A549 (cell line): ENCODE measurements at regions of chr11 and their contacts with region 1.

Region 1: DNA sequence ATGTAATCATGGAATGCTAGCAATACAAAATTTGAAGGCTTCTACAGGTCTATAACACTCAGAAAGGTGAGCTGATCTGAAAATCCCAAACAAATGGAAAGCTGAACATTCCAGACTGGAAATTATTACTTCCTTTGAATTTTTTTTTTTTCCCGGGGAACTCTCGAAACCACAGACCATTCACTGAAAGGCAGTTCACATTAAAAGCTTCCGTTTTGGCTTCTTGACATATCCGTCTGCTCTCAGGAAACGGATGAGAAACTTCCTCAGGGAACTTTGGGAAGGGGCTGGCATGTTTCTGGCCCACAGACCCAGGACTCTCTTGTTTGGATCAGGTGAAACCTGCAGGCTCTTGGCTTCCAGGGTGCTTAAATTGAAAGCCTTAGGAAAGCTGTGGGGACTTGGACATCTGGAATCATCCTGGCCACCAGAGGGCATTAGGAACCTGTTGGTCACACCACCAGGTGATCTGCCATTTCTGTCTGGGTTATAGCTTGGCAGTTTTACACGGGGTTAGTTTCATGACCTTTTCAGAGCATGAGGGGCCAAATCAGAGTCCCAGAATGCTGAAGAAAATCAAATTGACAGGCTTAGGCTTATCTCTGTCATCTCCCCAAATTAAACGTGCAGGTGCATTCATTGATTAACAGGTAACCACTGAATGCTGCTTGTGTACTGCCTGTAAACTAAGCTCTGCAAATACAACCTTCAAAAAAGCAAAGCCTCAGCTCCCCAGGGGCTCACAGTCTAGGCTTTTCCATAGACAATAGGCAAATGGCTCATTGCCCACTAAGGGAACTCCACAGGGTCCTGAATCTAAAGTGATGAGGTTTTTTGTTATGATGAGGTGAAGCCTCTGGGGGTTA is 22.7 kb upstream of the GRAMD1B start:
- DNase-seq: peak; percentile 51 to 82
- ATAC-seq: peak; percentile 97
- H3K4me3 ChIP-seq: no peak overlapping the region
- H3K27ac ChIP-seq: peak overlapping the region; percentile 16 to 31; a peak in 2 of 6 replicates
- H3K4me1 ChIP-seq: peaks cover 18% of the 10 kb centered on the region
- CTCF ChIP-seq: peak; percentile 73
- EP300 ChIP-seq: no peak
- POLR2A ChIP-seq: no peak
- RAD21 ChIP-seq: peak; percentile 87 to 92

Region 2: GRCh38 chr11:123301696-123302400 is 105.5 kb before region 1 on chr11:
- CTCF ChIA-PET with region 1: interaction called, 20 read pairs
- POLR2A ChIA-PET with region 1: no interaction called
- DNase-seq: peak; percentile 29 to 44
- ATAC-seq: peak; percentile 80 to 95
- H3K4me3 ChIP-seq: peak overlapping the region; percentile 38
- H3K27ac ChIP-seq: peak overlapping the region; percentile 55 to 86; a peak in 5 of 6 replicates
- H3K4me1 ChIP-seq: peaks cover 17% of the 10 kb centered on the region; the same call in 2 of the 3 replicates
- CTCF ChIP-seq: peak; percentile 79
- EP300 ChIP-seq: no peak
- POLR2A ChIP-seq: no peak
- RAD21 ChIP-seq: peak; percentile 45 to 78; a peak in 4 of 5 replicates

Region 3: DNA sequence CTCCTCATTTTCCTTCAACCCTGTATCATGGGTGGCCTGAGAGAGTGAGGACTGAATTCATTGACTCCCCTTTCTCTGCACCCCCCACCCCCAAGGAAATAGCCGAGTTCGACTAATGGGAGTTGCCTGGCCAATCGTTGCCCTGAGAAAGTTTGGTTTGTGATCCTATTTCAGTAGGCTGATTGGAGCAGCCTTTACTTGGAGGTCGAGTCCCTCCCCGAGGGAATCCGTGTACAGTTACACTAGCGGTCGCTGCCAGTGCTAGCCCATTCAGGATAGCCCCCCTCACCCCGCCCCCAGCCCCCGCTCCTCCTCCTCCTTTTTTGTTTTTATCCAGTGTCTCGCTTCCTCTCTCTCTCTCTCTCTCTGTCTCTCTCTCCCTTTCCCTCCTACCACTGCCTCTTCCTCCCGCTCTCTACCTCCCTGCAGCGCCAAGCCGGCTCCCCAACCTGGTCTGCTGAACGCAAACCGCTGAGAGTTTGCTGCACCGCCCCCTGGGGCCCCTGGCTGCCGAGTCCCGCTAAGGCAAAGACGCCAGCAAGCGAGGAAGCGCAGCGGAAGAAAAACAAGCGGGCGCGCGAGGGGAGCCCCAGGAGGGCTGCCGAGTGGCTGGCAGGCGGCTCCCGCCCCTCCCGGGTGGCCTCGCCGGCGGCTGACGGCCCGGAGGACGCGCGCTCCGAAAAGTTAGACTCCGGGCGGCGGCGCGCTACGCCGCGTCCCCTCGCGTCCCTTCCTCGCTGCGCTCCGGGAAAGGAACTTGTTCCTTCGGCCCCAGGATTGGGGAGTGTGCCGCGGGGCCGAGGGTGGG is 22.8 kb after region 1 on chr11 and contains the start of gene GRAMD1B:
- CTCF ChIA-PET with region 1: interaction called, 38 read pairs
- POLR2A ChIA-PET with region 1: interaction called, 4 read pairs
- DNase-seq: peak; percentile 68 to 73
- ATAC-seq: peak; percentile 75 to 81
- H3K4me3 ChIP-seq: peak within 1 kb of the TSS; percentile 93
- H3K27ac ChIP-seq: peak within 1 kb of the TSS; percentile 94 to 95
- H3K4me1 ChIP-seq: peaks cover 14% of the 10 kb centered on the region; the same call in 2 of the 3 replicates
- CTCF ChIP-seq: peak; percentile 0; the same call in 1 of the 3 replicates
- EP300 ChIP-seq: no peak
- POLR2A ChIP-seq: no peak
- RAD21 ChIP-seq: no peak
- polyA plus RNA-seq, gene GRAMD1B: 108 and 113 TPM in 2 replicates

Region 4: DNA sequence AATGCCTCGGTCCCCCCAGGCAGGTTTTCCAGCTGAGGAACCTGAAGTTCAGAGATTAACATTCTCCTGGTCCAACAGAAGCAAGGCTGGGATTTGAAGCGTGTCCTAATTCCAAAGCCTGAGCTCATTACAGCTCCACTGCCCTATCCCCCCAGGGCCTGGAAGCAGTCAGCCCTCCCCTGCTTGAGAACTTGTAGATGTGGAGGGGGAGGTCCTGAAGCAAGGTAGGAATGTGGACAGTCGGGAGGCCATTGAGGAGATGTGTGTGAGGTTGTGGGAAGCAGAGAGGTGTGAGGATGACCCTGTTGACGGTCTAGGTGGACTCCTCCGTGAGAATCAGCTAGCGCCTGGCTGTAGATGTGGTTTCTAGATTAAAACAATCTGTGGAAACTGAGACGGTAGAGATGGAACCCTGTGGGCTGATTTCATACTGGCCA is 30.8 kb after region 1 on chr11:
- CTCF ChIA-PET with region 1: interaction called, 17 read pairs
- POLR2A ChIA-PET with region 1: no interaction called
- DNase-seq: no peak
- ATAC-seq: no peak; a peak in 1 of 6 replicates
- H3K4me3 ChIP-seq: no peak overlapping the region
- H3K27ac ChIP-seq: peak overlapping the region in 1 of 2 experiments; percentile 26; a peak in 1 of 6 replicates
- H3K4me1 ChIP-seq: peaks cover 16% of the 10 kb centered on the region
- CTCF ChIP-seq: no peak
- EP300 ChIP-seq: no peak
- POLR2A ChIP-seq: no peak
- RAD21 ChIP-seq: no peak

Region 5: GRCh38 chr11:123478352-123478987 is 71.1 kb after region 1 on chr11:
- CTCF ChIA-PET with region 1: interaction called, 147 read pairs
- POLR2A ChIA-PET with region 1: no interaction called
- DNase-seq: peak; percentile 71 to 80
- ATAC-seq: peak; percentile 50 to 57; a peak in 3 of 6 replicates
- H3K4me3 ChIP-seq: no peak overlapping the region
- H3K27ac ChIP-seq: peak overlapping the region; percentile 58 to 96
- H3K4me1 ChIP-seq: peaks cover 80% of the 10 kb centered on the region
- CTCF ChIP-seq: peak; percentile 69
- EP300 ChIP-seq: no peak
- POLR2A ChIP-seq: no peak
- RAD21 ChIP-seq: peak; percentile 84 to 85

Region 6: DNA sequence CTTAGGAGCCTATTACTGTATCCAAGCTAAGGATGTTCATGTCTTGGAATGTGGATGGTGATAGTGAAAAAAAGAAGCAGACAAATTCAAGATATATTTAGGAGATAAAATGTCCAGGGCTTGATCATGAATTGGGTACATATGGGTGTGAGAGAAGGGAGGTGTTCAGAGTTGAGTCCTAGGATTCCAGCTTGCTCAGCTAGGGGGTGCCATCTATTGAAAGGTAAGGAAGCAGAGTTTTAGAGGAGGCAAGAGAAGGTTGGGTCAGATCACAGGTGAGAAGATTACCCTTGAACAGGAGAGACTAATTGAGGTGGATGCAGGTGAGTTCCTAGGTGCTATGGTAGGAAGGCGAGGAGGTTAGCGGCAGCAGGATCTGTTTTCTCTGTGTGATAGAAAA is 83.2 kb after region 1 on chr11:
- CTCF ChIA-PET with region 1: interaction called, 18 read pairs
- POLR2A ChIA-PET with region 1: no interaction called
- DNase-seq: no peak
- ATAC-seq: no peak
- H3K4me3 ChIP-seq: no peak overlapping the region
- H3K27ac ChIP-seq: no peak overlapping the region
- H3K4me1 ChIP-seq: peaks cover 32% of the 10 kb centered on the region
- CTCF ChIP-seq: no peak
- EP300 ChIP-seq: no peak
- POLR2A ChIP-seq: no peak
- RAD21 ChIP-seq: no peak